AG04450 (cell line): ENCODE measurements at regions of chr7 and their contacts with region 1.

Region 1: DNA sequence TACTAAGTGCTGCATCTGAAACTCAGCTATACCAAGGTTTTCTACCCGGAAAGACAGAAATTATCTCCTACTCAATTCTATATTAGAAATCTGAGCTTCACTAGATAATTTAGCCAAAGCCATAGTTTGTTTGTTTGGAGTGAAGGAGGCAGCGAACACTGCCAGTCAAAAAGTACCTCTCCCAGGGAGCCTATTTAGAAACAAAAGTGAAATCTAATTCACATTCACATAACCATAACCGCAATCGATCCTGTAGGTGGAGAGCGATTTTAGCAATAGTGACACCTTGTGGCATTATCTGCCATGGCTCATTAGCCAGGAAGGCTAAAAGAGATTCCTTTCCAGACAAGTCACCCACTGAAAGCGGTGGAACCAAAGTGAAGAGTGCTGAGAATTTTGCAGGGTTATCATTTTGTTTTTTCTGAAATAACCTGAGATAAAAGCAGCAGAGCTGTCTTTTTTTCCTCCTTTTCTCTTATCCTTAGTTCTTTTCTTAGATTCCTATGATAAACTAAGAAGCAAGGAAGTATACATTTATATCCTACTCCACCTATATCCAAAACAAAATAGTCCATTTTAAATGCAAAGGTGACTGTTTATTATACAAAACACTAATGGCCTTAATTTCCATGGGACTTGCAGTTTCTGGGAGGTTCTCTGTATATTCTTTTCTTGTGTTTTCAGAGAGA is 83.7 kb upstream of the BET1 start:
- DNase-seq: peak; percentile 66
- H3K4me3 ChIP-seq: peak overlapping the region; percentile 35; the same call in 1 of the 2 replicates
- H3K27ac ChIP-seq: no peak overlapping the region
- H3K27me3 ChIP-seq: no peaks in the 10 kb centered on the region
- CTCF ChIP-seq: peak; percentile 84

Region 2: GRCh38 chr7:93799750-93800357 is 288.0 kb before region 1 on chr7:
- CTCF ChIA-PET with region 1: interaction called, 37 read pairs
- POLR2A ChIA-PET with region 1: no interaction called
- DNase-seq: no peak
- H3K4me3 ChIP-seq: no peak overlapping the region
- H3K27ac ChIP-seq: no peak overlapping the region
- H3K27me3 ChIP-seq: no peaks in the 10 kb centered on the region
- CTCF ChIP-seq: peak; percentile 61

Region 3: DNA sequence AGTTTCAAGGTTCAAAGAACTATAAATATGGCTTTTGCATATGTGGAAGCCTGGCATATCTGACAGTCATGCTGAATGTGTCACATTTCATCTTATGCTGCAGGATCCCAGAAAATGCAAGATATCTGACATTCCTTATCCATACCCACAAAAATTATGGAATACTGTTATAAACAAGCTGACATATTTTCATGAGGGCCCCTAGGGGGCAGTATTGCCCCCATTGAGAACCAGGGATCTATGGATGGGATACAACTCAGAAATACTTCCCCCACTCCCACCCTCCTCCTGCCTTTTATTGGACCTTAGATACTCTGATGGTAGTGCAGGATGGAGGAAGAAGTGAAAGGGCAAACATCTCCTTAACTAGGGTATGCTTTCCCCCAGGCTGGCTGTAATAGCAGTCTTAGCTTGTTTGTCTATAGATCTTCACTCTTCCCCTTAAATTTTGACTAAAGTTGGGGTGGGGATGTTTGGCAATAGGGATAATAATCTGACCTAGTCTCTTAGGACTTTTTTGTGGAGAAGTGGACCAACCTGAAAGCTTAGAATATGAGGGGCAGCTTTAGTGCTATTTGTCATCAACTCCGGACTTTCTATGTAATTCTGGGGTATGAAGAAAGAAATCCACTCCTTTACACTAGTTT is 184.9 kb before region 1 on chr7:
- CTCF ChIA-PET with region 1: interaction called, 33 read pairs
- POLR2A ChIA-PET with region 1: no interaction called
- DNase-seq: peak; percentile 41
- H3K4me3 ChIP-seq: no peak overlapping the region
- H3K27ac ChIP-seq: no peak overlapping the region
- H3K27me3 ChIP-seq: no peaks in the 10 kb centered on the region
- CTCF ChIP-seq: peak; percentile 90

Region 4: GRCh38 chr7:94069162-94069739 is 18.6 kb before region 1 on chr7:
- CTCF ChIA-PET with region 1: interaction called, 16 read pairs
- POLR2A ChIA-PET with region 1: no interaction called
- DNase-seq: no peak
- H3K4me3 ChIP-seq: no peak overlapping the region
- H3K27ac ChIP-seq: no peak overlapping the region
- H3K27me3 ChIP-seq: no peaks in the 10 kb centered on the region
- CTCF ChIP-seq: no peak

Region 5: GRCh38 chr7:94100723-94101345 is 13.0 kb after region 1 on chr7:
- CTCF ChIA-PET with region 1: interaction called, 10 read pairs
- POLR2A ChIA-PET with region 1: no interaction called
- DNase-seq: no peak
- H3K4me3 ChIP-seq: no peak overlapping the region
- H3K27ac ChIP-seq: no peak overlapping the region
- H3K27me3 ChIP-seq: no peaks in the 10 kb centered on the region
- CTCF ChIP-seq: no peak

Region 6: GRCh38 chr7:94223375-94224070 is 135.7 kb after region 1 on chr7:
- CTCF ChIA-PET with region 1: interaction called, 20 read pairs
- POLR2A ChIA-PET with region 1: no interaction called
- DNase-seq: peak; percentile 34
- H3K4me3 ChIP-seq: no peak overlapping the region
- H3K27ac ChIP-seq: no peak overlapping the region
- H3K27me3 ChIP-seq: no peaks in the 10 kb centered on the region
- CTCF ChIP-seq: peak; percentile 74